CD4-positive, alpha-beta memory T cell (primary cell): ENCODE measurements at regions of chr9 and their contacts with region 1.

Region 1: GRCh38 chr9:109903515-109904138 is 123.6 kb downstream of the PALM2AKAP2 start:
- DNase-seq: peak; percentile 51 to 65 (median 58)
- H3K4me3 ChIP-seq: no peak overlapping the region
- H3K4me3 Mint-ChIP-seq: no peak overlapping the region
- H3K27ac ChIP-seq: no peak overlapping the region
- H3K27ac Mint-ChIP-seq: no peak overlapping the region
- H3K4me1 ChIP-seq: no peaks in the 10 kb centered on the region
- H3K4me1 Mint-ChIP-seq: peaks cover 0 to 5% (median 0%) of the 10 kb centered on the region in 4 donors
- H3K27me3 ChIP-seq: no peaks in the 10 kb centered on the region
- H3K27me3 Mint-ChIP-seq: peaks cover 2 to 4% of the 10 kb centered on the region in 2 donors

Region 2: GRCh38 chr9:109742759-109743436 is 160.7 kb before region 1 on chr9:
- CTCF ChIA-PET with region 1: no interaction called
- POLR2A ChIA-PET with region 1: no interaction called
- intact Hi-C with region 1: no loop called
- DNase-seq: no peak
- H3K4me3 ChIP-seq: no peak overlapping the region
- H3K4me3 Mint-ChIP-seq: no peak overlapping the region
- H3K27ac ChIP-seq: no peak overlapping the region
- H3K27ac Mint-ChIP-seq: no peak overlapping the region
- H3K4me1 ChIP-seq: no peaks in the 10 kb centered on the region
- H3K4me1 Mint-ChIP-seq: no peaks in the 10 kb centered on the region
- H3K27me3 ChIP-seq: peaks cover 5% of the 10 kb centered on the region
- H3K27me3 Mint-ChIP-seq: peaks cover 5 to 19% of the 10 kb centered on the region in 2 donors

Region 3: GRCh38 chr9:109893241-109893640 is 10.4 kb before region 1 on chr9:
- CTCF ChIA-PET with region 1: interaction called, 13 read pairs
- POLR2A ChIA-PET with region 1: no interaction called
- intact Hi-C with region 1: no loop called
- DNase-seq: no peak
- H3K4me3 ChIP-seq: no peak overlapping the region
- H3K4me3 Mint-ChIP-seq: peak overlapping the region in 3 of 8 donors; percentile 17 to 71 (median 68)
- H3K27ac ChIP-seq: no peak overlapping the region
- H3K27ac Mint-ChIP-seq: peak overlapping the region in 2 of 7 donors; percentile 46 to 73
- H3K4me1 ChIP-seq: no peaks in the 10 kb centered on the region
- H3K4me1 Mint-ChIP-seq: peaks cover 4 to 31% (median 13%) of the 10 kb centered on the region in 4 donors
- H3K27me3 ChIP-seq: no peaks in the 10 kb centered on the region
- H3K27me3 Mint-ChIP-seq: no peaks in the 10 kb centered on the region

Region 4: DNA sequence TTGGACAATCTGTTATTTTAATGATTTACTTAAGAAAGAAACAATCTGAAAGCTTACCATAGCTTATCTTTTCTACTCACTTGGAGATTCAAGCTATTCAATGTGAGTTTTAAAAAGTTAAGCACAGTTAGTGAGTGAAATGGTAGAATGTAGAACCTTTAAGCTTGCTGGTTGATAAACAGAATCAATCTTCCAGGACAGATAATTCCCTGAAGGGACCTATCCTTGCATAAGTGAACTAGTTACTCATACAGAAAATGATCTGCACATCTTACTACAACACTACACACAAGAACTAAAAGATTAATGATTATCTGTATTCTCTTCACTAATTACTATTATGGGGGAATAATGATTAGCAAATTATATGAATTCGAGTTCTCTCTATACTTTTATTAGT is 41.9 kb after region 1 on chr9:
- CTCF ChIA-PET with region 1: interaction called, 14 read pairs
- POLR2A ChIA-PET with region 1: no interaction called
- intact Hi-C with region 1: no loop called
- DNase-seq: no peak
- H3K4me3 ChIP-seq: no peak overlapping the region
- H3K4me3 Mint-ChIP-seq: no peak overlapping the region
- H3K27ac ChIP-seq: no peak overlapping the region
- H3K27ac Mint-ChIP-seq: no peak overlapping the region
- H3K4me1 ChIP-seq: peaks cover 3% of the 10 kb centered on the region
- H3K4me1 Mint-ChIP-seq: peaks cover 0 to 5% (median 2%) of the 10 kb centered on the region in 4 donors
- H3K27me3 ChIP-seq: no peaks in the 10 kb centered on the region
- H3K27me3 Mint-ChIP-seq: peaks cover 2 to 4% of the 10 kb centered on the region in 2 donors

Region 5: DNA sequence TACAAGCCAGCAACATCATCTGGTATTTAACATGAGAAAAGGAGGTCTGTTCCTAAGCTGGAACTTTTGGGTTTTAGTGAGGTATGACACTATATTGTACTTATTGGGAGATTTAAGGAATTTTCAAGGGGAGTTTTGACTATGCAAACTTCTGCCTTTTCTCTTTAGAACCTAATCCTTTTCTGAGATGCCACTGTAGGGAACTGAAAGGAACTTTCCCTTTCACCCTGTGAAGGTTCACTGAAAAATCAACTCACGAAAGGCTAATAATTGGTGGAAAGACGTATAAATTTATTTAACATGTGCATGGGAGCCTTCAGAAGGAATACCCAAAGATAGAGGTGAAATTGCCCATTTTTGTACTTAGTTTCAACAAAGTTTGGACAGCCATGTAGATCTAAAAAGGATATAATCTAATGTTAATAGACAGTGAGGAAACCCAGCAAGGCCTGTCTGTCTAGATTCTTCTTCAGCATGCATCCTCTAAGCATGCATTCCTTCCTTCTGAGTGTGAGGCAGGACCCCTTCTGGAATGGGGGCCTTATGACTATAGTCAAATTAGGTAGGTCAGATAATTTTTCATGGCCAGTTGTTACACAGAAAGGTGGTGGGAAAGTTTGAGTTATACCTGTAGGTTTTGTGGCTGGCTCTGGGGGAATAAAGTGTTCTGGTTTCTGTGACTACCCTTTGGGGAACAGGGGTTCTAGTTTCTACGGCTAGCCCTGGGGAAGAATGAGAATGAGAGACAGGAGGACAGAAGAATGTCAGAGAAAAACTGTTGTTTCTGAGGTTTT is 104.0 kb after region 1 on chr9:
- CTCF ChIA-PET with region 1: interaction called, 13 read pairs
- POLR2A ChIA-PET with region 1: no interaction called
- intact Hi-C with region 1: no loop called
- DNase-seq: no peak
- H3K4me3 ChIP-seq: no peak overlapping the region
- H3K4me3 Mint-ChIP-seq: no peak overlapping the region
- H3K27ac ChIP-seq: no peak overlapping the region
- H3K27ac Mint-ChIP-seq: peak overlapping the region in 1 of 7 donors; percentile 18
- H3K4me1 ChIP-seq: peaks cover 15% of the 10 kb centered on the region
- H3K4me1 Mint-ChIP-seq: peaks cover 11 to 34% (median 23%) of the 10 kb centered on the region in 4 donors
- H3K27me3 ChIP-seq: no peaks in the 10 kb centered on the region
- H3K27me3 Mint-ChIP-seq: peaks cover 0 to 2% of the 10 kb centered on the region in 2 donors

Region 6: DNA sequence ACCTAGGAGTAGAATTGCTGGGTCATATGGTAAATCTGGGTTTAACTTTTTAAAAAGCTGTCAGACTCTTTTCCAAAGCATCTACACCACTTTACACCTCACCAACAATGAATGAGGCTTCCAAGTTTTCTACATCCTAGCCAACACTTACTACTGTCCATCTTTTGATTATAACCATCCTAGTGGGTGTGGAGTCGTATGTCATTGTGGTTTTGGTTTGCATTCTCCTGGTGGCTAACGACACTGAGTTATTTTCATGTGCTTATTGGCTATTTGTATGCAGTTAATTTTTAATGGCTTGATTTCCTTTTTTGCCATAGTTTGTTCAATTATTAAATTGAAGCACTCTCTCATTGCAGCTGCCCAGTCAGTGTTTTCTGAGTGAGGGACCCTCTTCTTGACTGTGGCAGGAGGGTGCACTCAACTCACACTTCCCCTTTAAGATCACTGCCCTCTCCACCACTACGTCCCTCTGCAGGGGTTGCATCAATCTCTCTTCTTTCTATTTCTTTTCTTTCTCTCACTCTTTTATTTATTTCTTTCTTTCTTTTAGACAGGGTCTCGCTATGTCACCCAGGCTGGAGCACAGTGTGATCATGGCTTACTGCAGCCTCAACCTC is 122.0 kb after region 1 on chr9:
- CTCF ChIA-PET with region 1: no interaction called
- POLR2A ChIA-PET with region 1: no interaction called
- intact Hi-C with region 1: no loop called
- DNase-seq: no peak
- H3K4me3 ChIP-seq: no peak overlapping the region
- H3K4me3 Mint-ChIP-seq: no peak overlapping the region
- H3K27ac ChIP-seq: no peak overlapping the region
- H3K27ac Mint-ChIP-seq: peak overlapping the region in 1 of 7 donors; percentile 14
- H3K4me1 ChIP-seq: peaks cover 21% of the 10 kb centered on the region
- H3K4me1 Mint-ChIP-seq: peaks cover 14 to 28% (median 20%) of the 10 kb centered on the region in 4 donors
- H3K27me3 ChIP-seq: no peaks in the 10 kb centered on the region
- H3K27me3 Mint-ChIP-seq: no peaks in the 10 kb centered on the region

Region 7: DNA sequence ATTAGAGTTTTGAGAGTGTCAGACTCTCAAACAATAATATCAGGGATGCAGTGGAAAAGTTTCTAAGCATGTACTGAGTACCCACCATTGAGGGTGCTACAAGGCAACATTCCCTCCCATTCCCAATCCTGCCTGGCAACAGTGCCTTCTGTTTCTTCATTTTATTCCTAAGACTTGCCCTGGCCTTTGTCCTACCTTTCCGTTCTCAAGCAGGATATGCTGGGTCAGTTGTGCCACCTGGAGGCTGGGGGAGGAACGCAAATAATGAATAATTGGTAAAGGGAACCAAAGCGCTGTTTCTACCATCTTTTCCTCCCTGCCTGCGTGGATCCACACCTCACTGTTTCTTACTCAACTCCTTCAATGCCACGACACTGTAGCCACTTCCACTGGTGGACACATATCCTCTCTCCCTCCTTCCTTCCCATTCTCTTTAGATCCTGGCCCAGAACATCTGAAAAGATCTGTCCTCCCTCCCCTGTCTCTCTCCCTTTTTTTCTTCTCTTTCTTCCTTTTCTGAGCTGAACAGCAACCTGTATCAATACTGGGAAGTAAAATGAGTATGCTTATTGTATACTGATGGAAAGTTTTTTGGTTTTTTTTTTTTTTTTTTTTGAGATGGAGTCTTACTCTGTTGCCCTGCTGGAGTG is 154.8 kb after region 1 on chr9:
- CTCF ChIA-PET with region 1: interaction called, 262 read pairs
- POLR2A ChIA-PET with region 1: interaction called, 7 read pairs
- intact Hi-C with region 1: loop called (anchors 1 kb)
- DNase-seq: peak in 4 of 5 donors; percentile 40 to 48 (median 47)
- H3K4me3 ChIP-seq: no peak overlapping the region
- H3K4me3 Mint-ChIP-seq: no peak overlapping the region
- H3K27ac ChIP-seq: no peak overlapping the region
- H3K27ac Mint-ChIP-seq: no peak overlapping the region
- H3K4me1 ChIP-seq: no peaks in the 10 kb centered on the region
- H3K4me1 Mint-ChIP-seq: peaks cover 4 to 15% (median 7%) of the 10 kb centered on the region in 4 donors
- H3K27me3 ChIP-seq: no peaks in the 10 kb centered on the region
- H3K27me3 Mint-ChIP-seq: no peaks in the 10 kb centered on the region

Region 8: GRCh38 chr9:110217656-110218099 is 314.1 kb after region 1 on chr9:
- CTCF ChIA-PET with region 1: interaction called, 22 read pairs
- POLR2A ChIA-PET with region 1: no interaction called
- intact Hi-C with region 1: loop called (anchors 1 kb)
- DNase-seq: peak in 4 of 5 donors; percentile 10 to 19 (median 12)
- H3K4me3 ChIP-seq: no peak overlapping the region
- H3K4me3 Mint-ChIP-seq: no peak overlapping the region
- H3K27ac ChIP-seq: no peak overlapping the region
- H3K27ac Mint-ChIP-seq: peak overlapping the region in 1 of 7 donors; percentile 15
- H3K4me1 ChIP-seq: no peaks in the 10 kb centered on the region
- H3K4me1 Mint-ChIP-seq: peaks cover 2 to 4% (median 3%) of the 10 kb centered on the region in 4 donors
- H3K27me3 ChIP-seq: peaks cover 4% of the 10 kb centered on the region
- H3K27me3 Mint-ChIP-seq: peaks cover 10 to 12% of the 10 kb centered on the region in 2 donors

Region 9: DNA sequence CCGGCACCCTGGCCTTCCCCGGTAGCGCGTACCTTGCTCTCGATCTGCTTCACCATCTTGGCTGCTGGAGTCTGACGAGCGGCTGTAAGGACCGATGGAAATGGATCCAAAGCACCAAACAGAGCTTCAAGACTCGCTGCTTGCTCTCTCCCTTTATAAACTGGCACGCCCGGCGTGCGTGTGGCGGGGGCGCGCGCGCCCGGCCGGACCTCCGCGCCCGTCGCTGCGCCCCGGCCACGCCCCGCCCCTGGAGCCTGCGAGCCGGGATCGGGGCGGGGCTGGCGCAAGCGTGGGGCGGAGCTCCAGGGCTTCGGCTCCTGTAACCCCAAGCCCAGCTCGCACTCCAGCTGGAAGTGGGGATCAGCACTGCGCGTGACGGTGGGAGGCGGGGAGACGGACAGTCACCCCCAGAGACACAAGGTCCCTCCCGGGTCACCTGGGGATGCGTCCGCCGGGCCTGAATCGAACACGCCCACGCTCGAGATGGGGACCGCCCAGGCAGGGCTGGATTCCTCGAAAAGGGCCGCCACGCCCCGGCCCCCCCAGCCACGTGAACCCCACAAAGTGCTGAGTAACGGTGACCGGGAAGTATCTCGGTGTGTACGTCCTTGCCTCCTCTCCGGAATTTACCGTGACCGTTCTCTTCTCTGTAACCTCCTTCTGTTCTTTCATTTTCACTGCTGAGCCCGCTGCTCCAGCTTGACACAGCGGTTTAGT is 352.9 kb after region 1 on chr9 and contains the start of gene TXN:
- CTCF ChIA-PET with region 1: no interaction called
- POLR2A ChIA-PET with region 1: no interaction called
- intact Hi-C with region 1: no loop called
- DNase-seq: peak; percentile 76 to 81 (median 81)
- H3K4me3 ChIP-seq: peak within 1 kb of the TSS; percentile 64 to 90
- H3K4me3 Mint-ChIP-seq: peak within 1 kb of the TSS; percentile 94 to 99 (median 97)
- H3K27ac ChIP-seq: peak within 1 kb of the TSS; percentile 69
- H3K27ac Mint-ChIP-seq: peak within 1 kb of the TSS; percentile 90 to 99 (median 96)
- H3K4me1 ChIP-seq: peaks cover 40% of the 10 kb centered on the region
- H3K4me1 Mint-ChIP-seq: peaks cover 26 to 47% (median 37%) of the 10 kb centered on the region in 4 donors
- H3K27me3 ChIP-seq: no peaks in the 10 kb centered on the region
- H3K27me3 Mint-ChIP-seq: no peaks in the 10 kb centered on the region
- total RNA-seq, gene TXN: 45.6 to 47.9 TPM